ENCODE measurements at regions of chrX and their contacts with region 1.

Region 1: GRCh38 chrX:55342533-55343501 is 78.1 kb upstream of the PAGE3 start:
- DNase-seq: peak; percentile 41
- H3K4me3 ChIP-seq: no peak overlapping the region
- H3K27ac ChIP-seq: no peak overlapping the region
- H3K4me1 ChIP-seq: no peaks in the 10 kb centered on the region
- H3K27me3 ChIP-seq: no peaks in the 10 kb centered on the region
- CTCF ChIP-seq: peak; percentile 35 to 59
- POLR2A ChIP-seq: no peak

Region 2: DNA sequence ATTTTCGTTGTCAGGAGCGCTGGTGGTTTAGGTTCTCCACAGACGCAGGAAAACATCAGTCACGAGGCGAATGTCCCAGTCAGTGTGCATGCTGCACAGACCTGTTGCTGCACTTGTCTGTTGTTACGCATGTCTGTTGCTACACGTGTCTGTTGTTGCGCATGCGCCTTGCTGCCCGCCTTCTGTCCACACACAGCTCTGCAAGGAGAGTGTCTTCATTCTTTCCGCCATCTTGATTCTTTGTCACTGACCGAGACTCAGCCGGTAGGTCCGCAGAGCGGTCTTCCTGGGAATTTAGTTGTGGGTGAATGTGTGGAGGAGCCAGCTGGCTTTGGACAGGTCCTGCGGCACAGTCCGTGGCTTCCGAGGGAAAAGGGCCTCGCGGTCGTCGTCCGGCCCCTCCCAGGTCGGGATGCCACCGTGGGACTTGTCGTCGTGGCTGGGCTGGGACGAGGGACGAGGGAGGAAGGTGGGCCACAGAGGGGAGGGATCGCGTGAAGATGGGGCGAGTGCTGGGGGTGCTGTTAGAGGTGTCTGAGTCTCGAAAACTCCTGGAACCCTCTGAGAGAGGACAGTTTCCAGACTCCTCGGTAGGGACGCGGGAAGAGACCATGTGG is 267.9 kb before region 1 on chrX and contains the start of gene PAGE2B:
- CTCF ChIA-PET with region 1: no interaction called
- POLR2A ChIA-PET with region 1: no interaction called
- dilution Hi-C with region 1: no loop called
- intact Hi-C with region 1: no loop called
- DNase-seq: no peak
- H3K4me3 ChIP-seq: no peak within 1 kb of the TSS
- H3K27ac ChIP-seq: no peak within 1 kb of the TSS
- H3K4me1 ChIP-seq: no peaks in the 10 kb centered on the region
- H3K27me3 ChIP-seq: no peaks in the 10 kb centered on the region
- CTCF ChIP-seq: no peak
- POLR2A ChIP-seq: no peak
- total RNA-seq, gene PAGE2B: not detected in 2 replicates

Region 3: GRCh38 chrX:55135171-55135570 is 207.6 kb before region 1 on chrX:
- CTCF ChIA-PET with region 1: interaction called, 61 read pairs
- POLR2A ChIA-PET with region 1: no interaction called
- dilution Hi-C with region 1: no loop called
- intact Hi-C with region 1: loop called (anchors 1 kb)
- DNase-seq: peak; percentile 59
- H3K4me3 ChIP-seq: no peak overlapping the region
- H3K27ac ChIP-seq: no peak overlapping the region
- H3K4me1 ChIP-seq: no peaks in the 10 kb centered on the region
- H3K27me3 ChIP-seq: no peaks in the 10 kb centered on the region
- CTCF ChIP-seq: peak; percentile 35 to 37
- POLR2A ChIP-seq: no peak

Measured in endothelial cell of umbilical vein (primary cell).